Activated CD4-positive, alpha-beta memory T cell treated with anti-CD3 and anti-CD28 coated beads for 36 hours (primary cell): ENCODE measurements at regions of chr1 and their contacts with region 1.

Region 1: DNA sequence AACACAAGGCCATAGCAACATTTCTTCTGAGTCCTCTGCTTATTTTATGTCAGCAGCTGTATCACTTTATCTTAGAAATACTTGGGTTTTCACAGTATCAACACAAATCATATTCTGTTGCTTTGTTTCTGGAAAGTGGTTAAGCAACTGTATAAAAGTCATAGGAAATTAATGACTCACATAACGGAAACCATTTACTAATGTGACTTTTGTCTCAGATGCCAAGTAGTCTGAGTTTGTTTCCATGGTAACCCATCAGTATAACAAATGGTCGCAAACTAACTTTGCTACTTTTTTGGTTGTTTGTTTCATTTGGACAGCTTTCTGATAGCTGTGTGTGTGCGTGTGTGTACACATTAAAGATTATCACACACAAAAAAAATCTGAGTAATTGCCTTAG is 31.1 kb downstream of the EEIG2 start:
- DNase-seq: no peak
- H3K4me3 Mint-ChIP-seq: no peak overlapping the region
- H3K27ac Mint-ChIP-seq: no peak overlapping the region
- H3K4me1 Mint-ChIP-seq: peaks cover 44% of the 10 kb centered on the region
- H3K27me3 Mint-ChIP-seq: no peaks in the 10 kb centered on the region

Region 2: DNA sequence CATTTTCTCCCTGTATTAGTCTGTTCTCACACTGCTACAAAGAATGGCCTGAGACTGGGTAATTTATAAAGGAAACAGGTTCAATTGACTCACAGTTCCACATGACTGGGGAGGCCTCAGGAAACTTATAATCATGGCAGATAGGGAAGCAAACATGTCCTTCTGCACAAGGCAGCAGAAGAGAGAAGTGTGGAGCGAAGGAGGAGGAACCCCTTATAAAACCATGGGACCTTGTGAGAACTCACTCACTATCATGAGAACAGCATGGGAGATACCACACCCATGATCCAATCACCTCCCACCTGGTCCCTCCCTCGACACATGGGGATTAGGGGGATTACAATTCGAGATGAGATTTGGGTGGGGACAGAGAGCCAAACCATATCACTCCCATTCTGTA is 66.3 kb before region 1 on chr1:
- CTCF ChIA-PET with region 1: no interaction called
- POLR2A ChIA-PET with region 1: no interaction called
- intact Hi-C with region 1: no loop called
- DNase-seq: no peak
- H3K4me3 Mint-ChIP-seq: no peak overlapping the region
- H3K27ac Mint-ChIP-seq: no peak overlapping the region
- H3K4me1 Mint-ChIP-seq: no peaks in the 10 kb centered on the region
- H3K27me3 Mint-ChIP-seq: no peaks in the 10 kb centered on the region

Region 3: DNA sequence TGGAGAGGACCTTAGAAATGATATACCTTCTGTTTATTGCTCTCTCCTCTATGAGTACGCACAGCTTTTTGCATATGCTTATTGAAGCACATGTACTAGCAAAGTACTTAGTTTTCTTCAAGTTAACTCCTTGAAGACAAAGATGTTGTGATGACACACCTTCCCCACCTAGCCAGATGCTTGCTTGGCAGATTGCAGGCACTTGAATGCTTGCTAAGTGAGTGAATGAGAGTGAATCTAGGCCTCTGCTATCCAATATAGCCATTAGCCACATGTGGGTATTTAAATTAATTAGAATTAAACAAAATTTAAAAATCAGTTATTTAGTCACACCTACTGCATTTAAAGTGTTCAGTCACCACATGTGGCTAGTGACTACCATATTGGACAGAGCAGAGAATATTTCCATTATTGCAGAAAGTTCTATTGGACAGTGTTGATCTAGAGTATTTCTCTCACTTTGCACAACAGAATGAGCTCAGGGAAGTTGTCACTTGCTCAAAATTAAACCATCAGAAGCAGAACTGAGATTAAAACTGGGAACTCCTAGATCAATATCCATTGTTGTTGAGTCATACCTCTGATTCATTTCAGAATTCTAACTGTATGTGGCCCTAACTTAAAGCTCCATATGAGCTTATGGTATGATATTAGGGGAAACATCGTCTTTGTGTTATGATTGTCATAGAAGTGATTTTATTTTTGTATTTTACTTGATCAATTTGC is 39.7 kb before region 1 on chr1:
- CTCF ChIA-PET with region 1: no interaction called
- POLR2A ChIA-PET with region 1: no interaction called
- intact Hi-C with region 1: loop called (anchors 2 kb)
- DNase-seq: no peak
- H3K4me3 Mint-ChIP-seq: no peak overlapping the region
- H3K27ac Mint-ChIP-seq: no peak overlapping the region
- H3K4me1 Mint-ChIP-seq: peaks cover 3% of the 10 kb centered on the region
- H3K27me3 Mint-ChIP-seq: peaks cover 4% of the 10 kb centered on the region